HEK293 (cell line): ENCODE measurements at regions of chrX and their contacts with region 1.

Region 1: GRCh38 chrX:132615391-132616131 is 126.7 kb upstream of the MBNL3 start:
- H3K4me3 ChIP-seq: no peak overlapping the region
- H3K27ac ChIP-seq: no peak overlapping the region
- H3K4me1 ChIP-seq: no peaks in the 10 kb centered on the region
- CTCF ChIP-seq: no peak

Region 2: GRCh38 chrX:132092439-132093065 is 523.0 kb before region 1 on chrX:
- CTCF ChIA-PET with region 1: interaction called, 10 read pairs
- POLR2A ChIA-PET with region 1: no interaction called
- H3K4me3 ChIP-seq: no peak overlapping the region
- H3K27ac ChIP-seq: no peak overlapping the region
- H3K4me1 ChIP-seq: no peaks in the 10 kb centered on the region
- CTCF ChIP-seq: 0 out of 2 replicates have a peak, but pooled peaks have one; percentile 49

Region 3: GRCh38 chrX:132226169-132226568 is 389.4 kb before region 1 on chrX:
- CTCF ChIA-PET with region 1: interaction called, 34 read pairs
- POLR2A ChIA-PET with region 1: no interaction called
- H3K4me3 ChIP-seq: no peak overlapping the region
- H3K27ac ChIP-seq: no peak overlapping the region
- H3K4me1 ChIP-seq: no peaks in the 10 kb centered on the region
- CTCF ChIP-seq: no peak; the same call in 1 of the 2 replicates

Region 4: DNA sequence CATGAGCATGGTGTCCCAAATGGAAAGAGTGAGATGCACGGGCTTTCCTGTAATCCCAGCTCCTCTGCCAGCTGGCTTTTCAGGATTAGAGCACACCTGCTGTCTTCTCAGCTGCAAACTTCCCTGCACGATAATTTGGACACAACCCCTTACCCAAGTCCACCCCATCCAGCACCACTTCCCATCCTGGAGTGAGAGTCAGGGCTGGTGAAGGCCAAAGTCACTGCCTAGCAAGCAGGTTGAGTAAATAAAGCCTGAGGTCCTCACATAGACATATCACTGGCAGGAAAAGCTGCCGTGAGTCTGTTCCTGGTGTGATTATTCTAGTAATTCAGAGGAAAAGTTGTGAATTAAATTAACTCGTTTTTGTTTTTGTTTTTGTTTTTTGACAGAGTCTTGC is 12.9 kb before region 1 on chrX:
- CTCF ChIA-PET with region 1: interaction called, 15 read pairs
- POLR2A ChIA-PET with region 1: no interaction called
- H3K4me3 ChIP-seq: no peak overlapping the region
- H3K27ac ChIP-seq: no peak overlapping the region
- H3K4me1 ChIP-seq: no peaks in the 10 kb centered on the region
- CTCF ChIP-seq: no peak

Region 5: DNA sequence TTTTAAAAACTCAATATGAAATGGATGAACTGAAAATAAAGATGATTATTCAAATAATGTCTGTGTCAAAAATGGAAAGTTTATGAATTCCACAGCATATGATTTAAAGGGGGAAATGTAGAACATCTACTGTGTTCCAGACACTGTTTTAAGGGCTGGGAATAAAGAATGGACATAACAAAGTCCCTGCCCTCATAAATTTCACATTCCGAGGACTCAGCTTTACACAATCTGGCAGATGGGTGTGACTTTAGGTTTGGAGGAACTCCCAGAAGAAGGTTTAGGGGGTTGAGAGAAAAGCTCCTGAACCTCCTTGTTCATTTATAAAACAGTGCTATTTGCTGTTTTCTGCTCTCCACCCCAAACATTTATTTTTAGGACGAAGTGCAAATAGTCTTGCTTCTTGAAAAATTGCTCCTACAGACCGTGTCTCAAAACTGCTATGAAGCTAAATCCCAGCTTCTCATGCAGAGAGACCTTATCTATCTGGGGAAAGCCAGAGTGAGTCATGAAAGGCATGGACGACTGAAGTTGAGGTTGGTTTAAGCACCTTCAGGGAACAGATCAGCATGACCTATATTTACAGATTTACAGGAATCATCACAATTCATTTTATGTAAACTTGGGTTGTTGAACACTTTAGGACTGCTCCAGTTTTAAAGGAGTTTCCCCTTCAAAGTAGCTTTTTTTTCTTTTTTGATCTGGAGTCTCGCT is 158.6 kb after region 1 on chrX:
- CTCF ChIA-PET with region 1: no interaction called
- POLR2A ChIA-PET with region 1: no interaction called
- H3K4me3 ChIP-seq: no peak overlapping the region
- H3K27ac ChIP-seq: no peak overlapping the region
- H3K4me1 ChIP-seq: no peaks in the 10 kb centered on the region
- CTCF ChIP-seq: no peak